HepG2 (cell line): ENCODE measurements at regions of chr10 and their contacts with region 1.

Region 1: GRCh38 chr10:119686439-119687191 is 35.4 kb downstream of the BAG3 start:
- DNase-seq: peak; percentile 70
- ATAC-seq: peak; percentile 88
- H3K4me3 ChIP-seq: peak overlapping the region; percentile 63 to 72 (median 66)
- H3K27ac ChIP-seq: no peak overlapping the region
- H3K4me1 ChIP-seq: peaks cover 20% of the 10 kb centered on the region
- H3K27me3 ChIP-seq: no peaks in the 10 kb centered on the region; a peak in 1 of 5 replicates
- CTCF ChIP-seq: peak; percentile 94
- EP300 ChIP-seq: no peak
- POLR2A ChIP-seq: no peak
- RAD21 ChIP-seq: peak; percentile 89

Region 2: GRCh38 chr10:119650692-119651513 is 35.7 kb before region 1 on chr10 and contains the start of gene BAG3:
- CTCF ChIA-PET with region 1: no interaction called
- POLR2A ChIA-PET with region 1: interaction called, 12 read pairs
- in situ Hi-C with region 1: no loop called
- intact Hi-C with region 1: no loop called
- DNase-seq: peak; percentile 69
- ATAC-seq: peak; percentile 88
- H3K4me3 ChIP-seq: peak within 1 kb of the TSS; percentile 89 to 98 (median 96)
- H3K27ac ChIP-seq: peak within 1 kb of the TSS; percentile 81
- H3K4me1 ChIP-seq: peaks cover 51% of the 10 kb centered on the region
- H3K27me3 ChIP-seq: no peaks in the 10 kb centered on the region
- CTCF ChIP-seq: no peak; the same call in 1 of the 2 replicates
- EP300 ChIP-seq: 0 out of 4 replicates have a peak, but pooled peaks of 1 of the 2 experiments have one; percentile 15
- POLR2A ChIP-seq: peak; percentile 93 to 94
- RAD21 ChIP-seq: no peak
- total RNA-seq, gene BAG3: 6.7 and 7.9 TPM in 2 replicates

Region 3: GRCh38 chr10:119742947-119743648 is 56.5 kb after region 1 on chr10:
- CTCF ChIA-PET with region 1: no interaction called
- POLR2A ChIA-PET with region 1: interaction called, 15 read pairs
- in situ Hi-C with region 1: no loop called
- intact Hi-C with region 1: no loop called
- DNase-seq: no peak
- ATAC-seq: peak; percentile 100
- H3K4me3 ChIP-seq: peak overlapping the region; percentile 45 to 61 (median 52)
- H3K27ac ChIP-seq: peak overlapping the region; percentile 95
- H3K4me1 ChIP-seq: peaks cover 69% of the 10 kb centered on the region
- H3K27me3 ChIP-seq: no peaks in the 10 kb centered on the region
- CTCF ChIP-seq: no peak
- EP300 ChIP-seq: peak in 1 of 2 experiments; percentile 51; a peak in 1 of 4 replicates
- POLR2A ChIP-seq: peak; percentile 61 to 63; a peak in 2 of 4 replicates
- RAD21 ChIP-seq: 0 out of 2 replicates have a peak, but pooled peaks have one; percentile 10

Region 4: DNA sequence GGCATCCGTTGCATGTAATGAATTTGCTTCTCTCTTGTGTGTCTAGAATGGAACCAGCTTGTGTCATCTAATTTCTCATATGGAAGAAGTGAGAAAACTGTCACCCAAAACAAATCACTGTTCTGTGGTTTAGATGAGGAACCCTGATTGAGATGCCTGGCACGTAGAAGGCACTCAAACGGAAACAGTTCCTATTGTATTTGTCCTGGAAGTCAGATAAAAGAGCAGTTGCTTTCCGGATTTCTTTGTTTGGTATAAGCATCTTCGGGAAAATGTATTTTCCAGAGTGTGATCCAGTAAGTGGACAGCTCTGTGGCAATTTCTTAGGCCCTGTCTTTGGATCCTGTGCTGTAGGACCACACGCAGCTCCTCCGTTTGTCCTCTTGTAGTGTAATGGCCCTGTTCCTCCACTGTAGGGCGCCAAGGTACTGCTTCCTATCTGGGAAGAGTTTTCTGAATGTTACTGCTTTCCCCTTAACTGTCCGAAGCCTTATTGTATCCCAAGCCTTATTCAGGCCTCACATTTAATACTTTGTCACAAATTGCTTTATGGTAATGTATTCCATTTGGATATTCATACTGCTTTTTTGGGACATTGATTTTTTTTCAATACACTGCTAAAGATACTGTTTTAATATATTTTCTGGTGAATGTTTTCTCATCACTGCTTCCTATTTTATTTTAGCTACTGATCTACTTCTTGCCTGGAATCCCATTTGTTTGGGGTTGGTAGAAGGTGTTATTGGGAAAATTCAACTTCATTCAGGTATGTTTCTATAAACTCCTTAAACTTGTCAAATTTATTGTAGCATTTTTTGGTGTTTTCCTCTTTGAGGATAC is 64.0 kb after region 1 on chr10:
- CTCF ChIA-PET with region 1: interaction called, 13 read pairs
- POLR2A ChIA-PET with region 1: interaction called, 5 read pairs
- in situ Hi-C with region 1: no loop called
- intact Hi-C with region 1: loop called (anchors 1 kb)
- DNase-seq: peak; percentile 73
- ATAC-seq: peak; percentile 83
- H3K4me3 ChIP-seq: no peak overlapping the region
- H3K27ac ChIP-seq: no peak overlapping the region
- H3K4me1 ChIP-seq: peaks cover 40% of the 10 kb centered on the region
- H3K27me3 ChIP-seq: no peaks in the 10 kb centered on the region
- CTCF ChIP-seq: peak; percentile 92
- EP300 ChIP-seq: no peak
- POLR2A ChIP-seq: no peak
- RAD21 ChIP-seq: peak; percentile 91

Region 5: GRCh38 chr10:119859420-119860258 is 173.0 kb after region 1 on chr10:
- CTCF ChIA-PET with region 1: interaction called, 18 read pairs
- POLR2A ChIA-PET with region 1: interaction called, 4 read pairs
- in situ Hi-C with region 1: loop called (anchors 5 kb)
- intact Hi-C with region 1: loop called (anchors 1 kb)
- DNase-seq: peak; percentile 44
- ATAC-seq: no peak
- H3K4me3 ChIP-seq: no peak overlapping the region
- H3K27ac ChIP-seq: no peak overlapping the region
- H3K4me1 ChIP-seq: peaks cover 26% of the 10 kb centered on the region
- H3K27me3 ChIP-seq: no peaks in the 10 kb centered on the region
- CTCF ChIP-seq: peak; percentile 64
- EP300 ChIP-seq: no peak
- POLR2A ChIP-seq: no peak
- RAD21 ChIP-seq: 0 out of 2 replicates have a peak, but pooled peaks have one; percentile 16

Region 6: GRCh38 chr10:120336911-120337540 is 650.4 kb after region 1 on chr10:
- CTCF ChIA-PET with region 1: interaction called, 3 read pairs
- POLR2A ChIA-PET with region 1: no interaction called
- in situ Hi-C with region 1: loop called (anchors 25 kb)
- intact Hi-C with region 1: no loop called
- DNase-seq: peak; percentile 33
- ATAC-seq: peak; percentile 34; the same call in 1 of the 3 replicates
- H3K4me3 ChIP-seq: no peak overlapping the region
- H3K27ac ChIP-seq: no peak overlapping the region
- H3K4me1 ChIP-seq: no peaks in the 10 kb centered on the region
- H3K27me3 ChIP-seq: peaks cover 0 to 7% of the 10 kb centered on the region in 2 experiments; a peak in 1 of 5 replicates
- CTCF ChIP-seq: peak; percentile 72
- EP300 ChIP-seq: no peak
- POLR2A ChIP-seq: no peak
- RAD21 ChIP-seq: no peak